Activated T-helper 2 cell treated with anti-CD3 and anti-CD28 coated beads, Interferon-gamma antibody, Interleukin-2, Interleukin-4, amounts not matched to agents 10 μg/mL and 5 μg/mL and 100 μg/mL, durations not matched to agents 14 hours and 24 hours and 36 hours (primary cell): ENCODE measurements at regions of chr4 and their contacts with region 1.

Region 1: GRCh38 chr4:48033825-48034413 is 17.3 kb downstream of the NIPAL1 start:
- DNase-seq: no peak
- H3K4me3 Mint-ChIP-seq: no peak overlapping the region
- H3K27ac Mint-ChIP-seq: no peak overlapping the region
- H3K4me1 Mint-ChIP-seq: peaks cover 22% of the 10 kb centered on the region
- H3K27me3 Mint-ChIP-seq: peaks cover 39% of the 10 kb centered on the region

Region 2: DNA sequence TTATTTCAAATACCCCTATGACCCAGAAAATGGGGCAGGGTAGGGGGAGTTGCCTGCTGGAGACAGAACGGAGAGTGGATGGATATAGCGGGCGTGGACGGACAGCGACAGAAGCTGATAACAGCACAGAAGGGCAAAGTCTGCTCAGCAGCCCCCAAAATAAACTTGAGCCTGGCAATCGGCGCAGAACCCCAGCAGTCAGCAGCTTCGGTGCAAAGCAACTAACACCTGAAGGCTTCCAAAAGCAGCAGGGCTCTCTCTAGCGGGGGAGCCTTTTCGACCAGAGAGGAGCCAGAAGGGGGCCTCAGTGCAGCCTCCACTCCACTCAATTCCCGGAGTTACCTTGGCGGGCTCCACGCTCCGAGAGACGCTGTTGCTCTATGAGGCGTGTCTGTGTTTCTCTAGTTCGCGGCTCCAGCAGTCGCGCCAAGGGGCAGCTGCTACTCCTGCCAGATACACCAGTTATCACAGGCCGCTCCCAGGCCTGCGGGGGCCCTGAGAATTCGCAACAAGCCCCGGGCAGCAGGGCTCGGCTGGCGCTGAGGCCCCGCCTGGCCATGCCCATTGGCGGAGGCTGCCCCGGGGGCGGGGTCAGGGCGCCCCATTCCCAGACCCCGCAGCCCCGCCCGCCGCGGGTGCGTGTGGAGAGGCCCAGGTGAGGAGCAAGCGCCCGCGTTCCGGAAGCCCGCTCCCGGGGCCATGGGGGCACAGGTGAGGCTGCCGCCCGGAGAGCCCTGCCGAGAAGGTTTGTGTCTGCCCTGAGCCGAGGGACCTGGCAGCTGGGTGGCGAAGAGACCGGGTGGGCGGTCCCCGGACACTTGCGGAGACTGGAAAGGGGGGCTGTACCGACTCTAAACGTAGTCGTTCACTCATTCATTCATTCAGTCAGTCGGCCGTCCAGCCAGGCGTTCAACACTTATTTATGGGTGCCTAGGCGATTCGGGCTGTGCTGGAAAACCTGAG is 17.5 kb before region 1 on chr4 and contains the starts of genes CNGA1 and NIPAL1:
- intact Hi-C with region 1: loop called (anchors 2 kb)
- DNase-seq: peak; percentile 30
- H3K4me3 Mint-ChIP-seq: peak within 1 kb of the TSS; percentile 66
- H3K27ac Mint-ChIP-seq: no peak within 1 kb of the TSS
- H3K4me1 Mint-ChIP-seq: peaks cover 17% of the 10 kb centered on the region
- H3K27me3 Mint-ChIP-seq: peaks cover 55% of the 10 kb centered on the region
- total RNA-seq, gene CNGA1: not detected in 2 replicates
- total RNA-seq, gene NIPAL1: 0.82 and 1.4 TPM in 2 replicates

Region 3: GRCh38 chr4:48047421-48047844 is 13.5 kb after region 1 on chr4:
- intact Hi-C with region 1: loop called (anchors 1 kb)
- DNase-seq: peak; percentile 48
- H3K4me3 Mint-ChIP-seq: peak overlapping the region; percentile 34
- H3K27ac Mint-ChIP-seq: peak overlapping the region; percentile 3
- H3K4me1 Mint-ChIP-seq: peaks cover 32% of the 10 kb centered on the region
- H3K27me3 Mint-ChIP-seq: peaks cover 72% of the 10 kb centered on the region

Region 4: GRCh38 chr4:48103483-48104139 is 69.7 kb after region 1 on chr4:
- intact Hi-C with region 1: loop called (anchors 2 kb)
- DNase-seq: no peak
- H3K4me3 Mint-ChIP-seq: no peak overlapping the region
- H3K27ac Mint-ChIP-seq: peak overlapping the region; percentile 54
- H3K4me1 Mint-ChIP-seq: peaks cover 15% of the 10 kb centered on the region
- H3K27me3 Mint-ChIP-seq: no peaks in the 10 kb centered on the region

Region 5: GRCh38 chr4:48138936-48139335 is 105.0 kb after region 1 on chr4:
- intact Hi-C with region 1: loop called (anchors 2 kb)
- DNase-seq: peak; percentile 24
- H3K4me3 Mint-ChIP-seq: peak overlapping the region; percentile 18
- H3K27ac Mint-ChIP-seq: peak overlapping the region; percentile 83
- H3K4me1 Mint-ChIP-seq: peaks cover 56% of the 10 kb centered on the region
- H3K27me3 Mint-ChIP-seq: no peaks in the 10 kb centered on the region

Region 6: GRCh38 chr4:48290146-48290772 is 256.3 kb after region 1 on chr4:
- intact Hi-C with region 1: no loop called
- DNase-seq: no peak
- H3K4me3 Mint-ChIP-seq: no peak overlapping the region
- H3K27ac Mint-ChIP-seq: no peak overlapping the region
- H3K4me1 Mint-ChIP-seq: peaks cover 1% of the 10 kb centered on the region
- H3K27me3 Mint-ChIP-seq: no peaks in the 10 kb centered on the region